ENCODE measurements at regions of chr5 and their contacts with region 1.

Region 1: GRCh38 chr5:97142521-97143254 is at the start of gene LIX1:
- DNase-seq: peak; percentile 43
- H3K4me3 Mint-ChIP-seq: no peak within 1 kb of the TSS
- H3K27ac Mint-ChIP-seq: no peak within 1 kb of the TSS
- H3K4me1 Mint-ChIP-seq: no peaks in the 10 kb centered on the region
- H3K27me3 Mint-ChIP-seq: peaks cover 4% of the 10 kb centered on the region
- total RNA-seq, gene LIX1: not detected

Region 2: GRCh38 chr5:96997265-96997859 is 145.3 kb before region 1 on chr5:
- CTCF ChIA-PET with region 1: interaction called, 27 read pairs
- POLR2A ChIA-PET with region 1: no interaction called
- intact Hi-C with region 1: no loop called
- DNase-seq: no peak
- H3K4me3 Mint-ChIP-seq: no peak overlapping the region
- H3K27ac Mint-ChIP-seq: no peak overlapping the region
- H3K4me1 Mint-ChIP-seq: peaks cover 13% of the 10 kb centered on the region
- H3K27me3 Mint-ChIP-seq: no peaks in the 10 kb centered on the region